Activated naive CD4-positive, alpha-beta T cell treated with anti-CD3 and anti-CD28 coated beads, Interleukin-2, amount 10 ng/mL, durations not matched to agents 7 days and 5 days (primary cell): ENCODE measurements at regions of chr1 and their contacts with region 1.

Region 1: DNA sequence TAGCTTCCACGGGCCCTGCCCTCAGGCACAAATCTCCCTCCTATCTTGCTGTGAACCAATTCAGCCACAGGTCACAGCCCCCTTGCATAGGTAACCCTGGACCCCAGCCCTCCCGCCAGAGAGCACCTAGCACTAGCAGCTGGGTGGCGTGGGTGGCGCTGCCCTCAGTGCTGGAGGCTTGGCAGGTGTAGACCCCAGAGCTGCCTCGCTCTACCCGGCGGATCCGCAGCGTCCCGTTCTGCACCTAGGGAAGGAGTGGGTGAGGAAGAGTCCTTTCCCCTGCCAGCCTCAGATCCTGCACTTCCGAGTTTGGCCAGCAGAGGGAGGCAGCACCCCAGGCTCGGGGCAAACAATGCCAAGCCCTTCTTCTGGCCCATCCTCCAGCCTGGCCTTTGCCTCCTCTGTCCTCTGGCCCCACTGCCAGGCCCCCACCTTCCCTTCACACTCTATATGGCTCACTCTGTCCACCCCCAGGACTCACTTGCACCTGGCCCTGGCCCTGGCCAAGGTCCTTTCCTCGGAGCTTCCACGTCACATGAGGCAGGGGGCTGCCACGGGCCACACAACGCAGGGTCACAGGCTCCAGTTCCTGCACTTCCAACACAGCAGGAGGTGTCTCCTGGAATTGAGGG is 9.0 kb downstream of the IGSF9 start:
- DNase-seq: peak; percentile 88
- H3K4me3 Mint-ChIP-seq: no peak overlapping the region
- H3K27ac Mint-ChIP-seq: no peak overlapping the region
- H3K4me1 Mint-ChIP-seq: peaks cover 23% of the 10 kb centered on the region
- H3K27me3 Mint-ChIP-seq: peaks cover 84% of the 10 kb centered on the region

Region 2: DNA sequence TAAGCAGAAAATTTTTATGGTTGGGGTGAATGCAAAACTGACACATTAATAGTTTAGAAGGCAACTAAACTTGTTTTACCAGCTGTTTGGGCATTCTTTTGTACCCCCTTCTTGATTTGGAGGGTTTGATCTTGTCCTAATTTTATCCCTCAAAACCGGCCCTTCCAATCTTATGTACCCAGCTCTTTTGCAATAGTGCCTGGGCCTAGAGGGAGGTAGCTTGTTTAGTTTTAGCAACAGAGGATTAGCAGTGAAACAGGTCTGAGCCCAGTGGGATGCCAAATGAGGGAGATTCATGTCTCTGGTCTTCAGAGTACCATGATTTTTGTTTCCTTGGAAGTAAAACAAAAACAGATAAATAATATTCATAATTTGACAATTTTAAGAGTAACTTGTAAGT is 267.1 kb before region 1 on chr1:
- CTCF ChIA-PET with region 1: no interaction called
- DNase-seq: no peak
- H3K4me3 Mint-ChIP-seq: no peak overlapping the region
- H3K27ac Mint-ChIP-seq: no peak overlapping the region
- H3K4me1 Mint-ChIP-seq: no peaks in the 10 kb centered on the region
- H3K27me3 Mint-ChIP-seq: peaks cover 6% of the 10 kb centered on the region

Region 3: DNA sequence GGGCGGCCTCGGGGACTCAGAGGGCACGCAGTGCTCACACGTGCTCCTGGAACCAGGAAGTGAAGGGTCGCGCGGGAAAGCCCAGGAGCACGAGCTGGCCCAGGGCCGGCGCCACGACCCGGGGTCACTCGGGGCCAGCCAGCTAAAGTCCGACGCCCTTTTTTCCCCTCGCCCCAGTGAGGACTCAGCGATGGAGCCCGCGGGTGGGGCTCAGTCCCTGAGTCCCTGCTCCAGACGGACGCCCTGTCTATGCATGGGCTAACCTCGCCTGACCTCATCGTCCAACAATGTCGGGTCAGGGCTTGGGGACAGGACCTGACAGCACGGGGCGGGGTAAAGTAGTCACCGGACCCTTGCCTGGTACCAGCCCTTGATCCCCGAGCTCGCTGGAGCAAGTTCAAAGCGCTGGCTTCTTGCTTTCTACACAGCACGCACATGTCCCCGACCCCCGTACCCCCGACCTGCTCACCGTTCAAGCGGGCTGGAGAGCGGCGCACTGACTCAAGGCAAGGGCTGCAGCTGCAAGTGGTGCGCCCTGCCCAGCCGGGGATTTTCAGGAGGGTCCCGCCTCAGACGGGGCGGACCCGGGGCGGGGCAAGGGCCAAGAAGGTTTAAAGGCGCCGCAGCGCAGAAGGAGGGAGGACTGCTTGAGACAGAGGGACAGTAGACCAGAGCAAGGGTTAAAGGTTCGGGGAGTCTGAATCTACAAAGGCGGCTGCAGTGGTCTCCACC is 11.2 kb before region 1 on chr1 and contains the start of gene TAGLN2:
- CTCF ChIA-PET with region 1: interaction called, 13 read pairs
- DNase-seq: peak; percentile 92
- H3K4me3 Mint-ChIP-seq: peak within 1 kb of the TSS; percentile 91
- H3K27ac Mint-ChIP-seq: peak within 1 kb of the TSS; percentile 94
- H3K4me1 Mint-ChIP-seq: peaks cover 49% of the 10 kb centered on the region
- H3K27me3 Mint-ChIP-seq: peaks cover 16% of the 10 kb centered on the region

Region 4: DNA sequence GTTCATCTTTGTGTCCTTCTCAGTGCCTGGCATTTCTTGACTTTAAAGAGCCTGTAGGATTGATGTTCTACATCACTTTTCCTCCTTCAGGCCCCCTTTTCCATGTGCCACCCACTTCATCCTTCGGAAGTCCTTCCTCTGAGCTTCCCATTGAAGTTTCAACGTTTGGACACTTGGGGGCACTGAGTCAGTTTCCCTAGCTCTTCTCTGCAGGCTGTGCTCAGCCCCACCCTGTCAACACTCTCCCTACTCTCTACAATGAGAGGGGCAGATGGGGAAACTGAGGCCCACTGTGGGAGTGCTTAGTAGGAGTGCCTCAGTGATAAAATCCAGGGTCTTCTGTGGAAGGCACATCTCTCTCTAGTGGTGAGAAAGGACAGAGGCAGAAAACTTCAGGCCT is 121.7 kb after region 1 on chr1:
- CTCF ChIA-PET with region 1: no interaction called
- DNase-seq: no peak
- H3K4me3 Mint-ChIP-seq: no peak overlapping the region
- H3K27ac Mint-ChIP-seq: no peak overlapping the region
- H3K4me1 Mint-ChIP-seq: no peaks in the 10 kb centered on the region
- H3K27me3 Mint-ChIP-seq: peaks cover 76% of the 10 kb centered on the region